H1 (cell line): ENCODE measurements at regions of chr13 and their contacts with region 1.

Region 1: GRCh38 chr13:31044377-31045285 is 112.2 kb downstream of the TEX26 start:
- DNase-seq: peak; percentile 72 to 87
- H3K4me3 ChIP-seq: peak overlapping the region in 1 of 4 experiments; percentile 35; a peak in 2 of 8 replicates
- H3K27ac ChIP-seq: no peak overlapping the region
- H3K4me1 ChIP-seq: peaks cover 0 to 4% (median 0%) of the 10 kb centered on the region in 4 experiments; a peak in 2 of 7 replicates
- H3K27me3 ChIP-seq: no peaks in the 10 kb centered on the region
- CTCF ChIP-seq: peak; percentile 96 to 97 (median 96)
- EP300 ChIP-seq: no peak
- POLR2A ChIP-seq: no peak
- RAD21 ChIP-seq: peak; percentile 94 to 97

Region 2: GRCh38 chr13:30802953-30803478 is 241.6 kb before region 1 on chr13:
- CTCF ChIA-PET with region 1: interaction called, 21 read pairs
- POLR2A ChIA-PET with region 1: no interaction called
- DNase-seq: peak; percentile 56 to 93
- H3K4me3 ChIP-seq: peak overlapping the region in 1 of 4 experiments; percentile 28; a peak in 2 of 8 replicates
- H3K27ac ChIP-seq: no peak overlapping the region
- H3K4me1 ChIP-seq: peaks cover 0 to 5% (median 2%) of the 10 kb centered on the region in 4 experiments; a peak in 4 of 7 replicates
- H3K27me3 ChIP-seq: peaks cover 0 to 3% (median 0%) of the 10 kb centered on the region in 4 experiments; a peak in 1 of 7 replicates
- CTCF ChIP-seq: peak; percentile 83 to 94 (median 91)
- EP300 ChIP-seq: peak in 1 of 2 experiments; percentile 25; a peak in 1 of 3 replicates
- POLR2A ChIP-seq: no peak
- RAD21 ChIP-seq: peak; percentile 95 to 98

Region 3: GRCh38 chr13:30943881-30944280 is 100.8 kb before region 1 on chr13:
- CTCF ChIA-PET with region 1: no interaction called
- POLR2A ChIA-PET with region 1: no interaction called
- DNase-seq: no peak
- H3K4me3 ChIP-seq: no peak overlapping the region
- H3K27ac ChIP-seq: no peak overlapping the region
- H3K4me1 ChIP-seq: no peaks in the 10 kb centered on the region
- H3K27me3 ChIP-seq: no peaks in the 10 kb centered on the region
- CTCF ChIP-seq: no peak
- EP300 ChIP-seq: no peak
- POLR2A ChIP-seq: no peak
- RAD21 ChIP-seq: no peak

Region 4: DNA sequence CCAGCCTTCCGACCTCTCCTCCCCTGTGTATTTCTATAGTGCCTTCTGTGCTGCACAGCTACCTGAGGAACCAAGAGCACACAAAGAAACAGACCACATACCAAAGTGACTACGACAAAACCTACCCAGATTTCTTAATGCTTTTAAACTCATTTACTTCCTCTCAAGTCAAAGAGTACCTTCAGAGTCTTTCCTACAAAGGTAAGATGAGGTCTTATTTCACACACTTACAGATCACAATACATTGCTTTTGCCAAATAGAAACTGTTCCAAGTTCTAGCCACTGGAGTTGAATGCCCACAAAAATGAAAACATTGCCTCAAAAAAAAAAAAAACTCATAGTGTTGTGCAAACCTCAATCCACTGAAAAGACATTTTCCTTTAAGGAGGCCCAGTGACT is 75.8 kb before region 1 on chr13:
- CTCF ChIA-PET with region 1: interaction called, 13 read pairs
- POLR2A ChIA-PET with region 1: no interaction called
- DNase-seq: no peak
- H3K4me3 ChIP-seq: no peak overlapping the region
- H3K27ac ChIP-seq: no peak overlapping the region
- H3K4me1 ChIP-seq: no peaks in the 10 kb centered on the region
- H3K27me3 ChIP-seq: no peaks in the 10 kb centered on the region
- CTCF ChIP-seq: no peak
- EP300 ChIP-seq: no peak
- POLR2A ChIP-seq: no peak
- RAD21 ChIP-seq: no peak

Region 5: GRCh38 chr13:31009166-31009565 is 35.5 kb before region 1 on chr13:
- CTCF ChIA-PET with region 1: interaction called, 17 read pairs
- POLR2A ChIA-PET with region 1: no interaction called
- DNase-seq: no peak
- H3K4me3 ChIP-seq: no peak overlapping the region
- H3K27ac ChIP-seq: no peak overlapping the region
- H3K4me1 ChIP-seq: peaks cover 2 to 13% (median 9%) of the 10 kb centered on the region in 4 experiments; a peak in 5 of 7 replicates
- H3K27me3 ChIP-seq: no peaks in the 10 kb centered on the region
- CTCF ChIP-seq: no peak
- EP300 ChIP-seq: no peak
- POLR2A ChIP-seq: no peak
- RAD21 ChIP-seq: no peak

Region 6: GRCh38 chr13:31029102-31029501 is 15.5 kb before region 1 on chr13:
- CTCF ChIA-PET with region 1: interaction called, 20 read pairs
- POLR2A ChIA-PET with region 1: no interaction called
- DNase-seq: no peak
- H3K4me3 ChIP-seq: no peak overlapping the region
- H3K27ac ChIP-seq: no peak overlapping the region
- H3K4me1 ChIP-seq: no peaks in the 10 kb centered on the region
- H3K27me3 ChIP-seq: no peaks in the 10 kb centered on the region
- CTCF ChIP-seq: no peak
- EP300 ChIP-seq: no peak
- POLR2A ChIP-seq: no peak
- RAD21 ChIP-seq: no peak

Region 7: DNA sequence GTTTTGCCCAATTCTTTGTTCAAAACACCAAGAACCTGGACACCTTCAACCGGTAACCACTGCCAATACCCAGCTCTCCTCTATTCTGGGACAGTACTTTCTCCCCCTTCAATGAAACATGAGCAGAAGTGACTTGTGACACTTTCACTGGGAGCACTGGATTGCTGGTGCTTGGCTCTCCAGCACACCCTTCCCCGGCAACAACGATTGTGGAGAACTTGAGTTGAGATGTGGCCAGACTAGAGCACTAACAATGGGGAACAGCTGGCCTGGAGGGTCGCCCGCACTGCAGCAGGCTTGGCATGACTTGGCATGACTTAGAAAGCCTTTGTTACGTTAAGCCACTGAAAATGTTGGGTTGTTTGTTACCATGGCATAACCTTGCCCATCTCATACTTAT is 147.7 kb after region 1 on chr13:
- CTCF ChIA-PET with region 1: no interaction called
- POLR2A ChIA-PET with region 1: no interaction called
- DNase-seq: no peak
- H3K4me3 ChIP-seq: no peak overlapping the region
- H3K27ac ChIP-seq: no peak overlapping the region
- H3K4me1 ChIP-seq: no peaks in the 10 kb centered on the region
- H3K27me3 ChIP-seq: no peaks in the 10 kb centered on the region
- CTCF ChIP-seq: no peak
- EP300 ChIP-seq: no peak
- POLR2A ChIP-seq: no peak
- RAD21 ChIP-seq: no peak